ENCODE measurements at regions of chr10 and their contacts with region 1.

Region 1: DNA sequence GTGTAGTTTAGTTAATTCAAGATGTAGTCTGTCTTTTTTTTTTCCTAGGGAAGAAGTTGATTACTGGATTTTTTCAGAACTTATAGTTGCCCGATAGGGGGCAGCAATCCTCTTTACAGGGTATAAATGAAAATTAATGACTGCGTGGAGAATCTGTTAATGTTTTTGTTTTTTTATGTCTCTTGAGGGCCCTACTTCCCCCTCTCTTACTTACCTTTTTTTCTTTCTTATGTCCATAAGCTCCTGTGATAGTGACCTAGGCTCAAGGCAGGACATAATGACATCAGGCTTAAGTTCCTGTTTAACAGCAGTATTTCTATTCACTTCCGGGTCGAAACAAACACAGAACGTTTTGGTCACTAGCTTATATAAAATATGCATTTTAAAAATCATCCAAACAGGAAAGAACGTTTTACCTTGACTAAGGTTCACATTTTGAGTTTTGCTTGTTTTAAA is 18.8 kb downstream of the CDC123 start:
- DNase-seq: peak; percentile 29
- CTCF ChIP-seq: peak; percentile 50

Region 2: DNA sequence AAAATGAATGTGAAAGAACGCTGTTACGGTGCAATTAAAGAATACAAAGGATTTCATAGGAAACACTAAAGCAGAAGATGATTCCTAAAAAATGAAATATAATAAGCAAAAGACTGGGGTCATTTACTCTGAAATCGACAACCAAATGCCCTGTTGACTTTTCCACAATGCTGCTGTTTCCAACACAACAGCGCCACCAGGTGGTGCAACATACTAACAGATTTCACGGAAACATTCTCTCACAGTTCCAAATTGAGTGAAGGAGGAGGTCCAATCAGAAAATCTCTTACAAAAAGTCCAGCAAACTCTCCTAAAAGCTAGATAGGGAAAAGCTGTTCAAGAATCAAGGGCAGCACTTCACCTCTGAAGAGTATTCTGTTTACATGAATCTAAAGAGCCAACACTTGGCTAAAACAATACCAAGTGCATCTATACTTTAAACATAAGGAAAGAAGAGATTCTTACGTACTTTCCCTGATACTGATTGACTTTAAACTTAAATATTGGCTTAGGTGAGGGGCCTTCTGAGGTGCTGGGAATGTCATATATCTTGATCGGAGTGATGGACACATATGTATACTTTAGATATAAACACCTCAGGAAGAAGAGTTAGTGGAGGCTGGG is 228.1 kb before region 1 on chr10:
- CTCF ChIA-PET with region 1: no interaction called
- POLR2A ChIA-PET with region 1: no interaction called
- DNase-seq: peak; percentile 67
- CTCF ChIP-seq: peak; percentile 68

Region 3: GRCh38 chr10:12186323-12186722 is 28.5 kb before region 1 on chr10:
- CTCF ChIA-PET with region 1: no interaction called
- POLR2A ChIA-PET with region 1: no interaction called
- DNase-seq: no peak
- CTCF ChIP-seq: no peak

Region 4: GRCh38 chr10:12201543-12201942 is 13.2 kb before region 1 on chr10:
- CTCF ChIA-PET with region 1: interaction called, 21 read pairs
- POLR2A ChIA-PET with region 1: no interaction called
- DNase-seq: no peak
- CTCF ChIP-seq: no peak

Region 5: GRCh38 chr10:12225444-12225843 is 10.7 kb after region 1 on chr10:
- CTCF ChIA-PET with region 1: interaction called, 39 read pairs
- POLR2A ChIA-PET with region 1: no interaction called
- DNase-seq: no peak
- CTCF ChIP-seq: no peak

Region 6: GRCh38 chr10:12235796-12236195 is 21.0 kb after region 1 on chr10:
- CTCF ChIA-PET with region 1: interaction called, 12 read pairs
- POLR2A ChIA-PET with region 1: no interaction called
- DNase-seq: no peak
- CTCF ChIP-seq: no peak

Region 7: GRCh38 chr10:12337453-12338372 is 122.9 kb after region 1 on chr10:
- CTCF ChIA-PET with region 1: no interaction called
- POLR2A ChIA-PET with region 1: no interaction called
- DNase-seq: no peak
- CTCF ChIP-seq: no peak

Region 8: GRCh38 chr10:12656518-12657142 is 441.8 kb after region 1 on chr10:
- CTCF ChIA-PET with region 1: interaction called, 20 read pairs
- POLR2A ChIA-PET with region 1: no interaction called
- DNase-seq: peak; percentile 75
- CTCF ChIP-seq: peak; percentile 57

Region 9: DNA sequence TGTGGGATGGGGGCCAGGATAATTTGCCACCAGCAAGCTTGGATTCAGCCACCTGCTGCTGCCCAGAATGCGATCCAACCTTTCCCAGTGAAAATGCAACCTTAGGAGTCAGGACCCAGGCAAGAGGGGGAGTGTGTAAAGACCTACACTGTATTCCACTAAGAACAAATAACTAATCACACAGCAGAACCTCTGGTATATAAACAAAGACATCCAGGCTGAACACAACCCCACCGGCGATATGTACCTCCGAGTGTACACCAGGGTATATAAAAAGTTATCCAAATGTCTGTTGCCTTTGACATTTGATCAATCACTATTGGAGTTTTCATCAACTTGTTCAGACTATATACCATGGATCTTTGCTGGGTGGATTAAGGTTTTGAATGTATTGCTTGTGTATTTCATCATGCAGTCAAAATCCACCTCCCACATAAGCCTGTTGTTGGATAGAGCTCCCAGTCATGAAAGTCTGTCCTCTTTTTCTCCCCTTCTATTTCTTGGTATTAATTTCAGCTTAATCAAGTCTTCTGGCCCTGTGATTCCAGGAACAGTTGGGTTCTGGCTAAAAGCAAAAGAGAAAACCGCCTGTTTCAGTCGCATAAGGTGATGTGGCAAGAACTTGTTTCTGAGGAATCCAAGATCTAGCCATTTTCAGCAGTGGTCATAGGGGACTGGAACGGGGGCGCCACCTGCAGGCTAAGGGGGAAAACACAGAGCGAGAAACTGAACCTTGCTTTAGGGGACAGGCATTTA is 496.0 kb after region 1 on chr10:
- CTCF ChIA-PET with region 1: interaction called, 22 read pairs
- POLR2A ChIA-PET with region 1: no interaction called
- DNase-seq: peak; percentile 82
- CTCF ChIP-seq: peak; percentile 95

Region 10: GRCh38 chr10:12902135-12902572 is 687.4 kb after region 1 on chr10:
- CTCF ChIA-PET with region 1: interaction called, 17 read pairs
- POLR2A ChIA-PET with region 1: no interaction called
- DNase-seq: peak; percentile 77
- CTCF ChIP-seq: peak; percentile 61

Measured in GM10248 (cell line).